Activated CD4-positive, alpha-beta T cell treated with anti-CD3 and anti-CD28 coated beads, Interleukin-2, amount 10 ng/mL, durations not matched to agents 24 days and 14 days (primary cell): ENCODE measurements at regions of chr1 and their contacts with region 1.

Region 1: GRCh38 chr1:22089787-22090186 is 37.3 kb downstream of the CDC42 start:
- DNase-seq: peak; percentile 76
- H3K4me3 Mint-ChIP-seq: peak overlapping the region; percentile 82
- H3K27ac Mint-ChIP-seq: peak overlapping the region; percentile 87
- H3K4me1 Mint-ChIP-seq: peaks cover 70% of the 10 kb centered on the region
- H3K27me3 Mint-ChIP-seq: no peaks in the 10 kb centered on the region

Region 2: GRCh38 chr1:22025368-22026155 is 64.2 kb before region 1 on chr1:
- intact Hi-C with region 1: loop called (anchors 2 kb)
- DNase-seq: peak; percentile 97
- H3K4me3 Mint-ChIP-seq: peak overlapping the region; percentile 90
- H3K27ac Mint-ChIP-seq: peak overlapping the region; percentile 100
- H3K4me1 Mint-ChIP-seq: peaks cover 48% of the 10 kb centered on the region
- H3K27me3 Mint-ChIP-seq: no peaks in the 10 kb centered on the region

Region 3: GRCh38 chr1:22075718-22076117 is 14.1 kb before region 1 on chr1:
- intact Hi-C with region 1: loop called (anchors 2 kb)
- DNase-seq: no peak
- H3K4me3 Mint-ChIP-seq: no peak overlapping the region
- H3K27ac Mint-ChIP-seq: peak overlapping the region; percentile 43
- H3K4me1 Mint-ChIP-seq: peaks cover 49% of the 10 kb centered on the region
- H3K27me3 Mint-ChIP-seq: no peaks in the 10 kb centered on the region

Region 4: DNA sequence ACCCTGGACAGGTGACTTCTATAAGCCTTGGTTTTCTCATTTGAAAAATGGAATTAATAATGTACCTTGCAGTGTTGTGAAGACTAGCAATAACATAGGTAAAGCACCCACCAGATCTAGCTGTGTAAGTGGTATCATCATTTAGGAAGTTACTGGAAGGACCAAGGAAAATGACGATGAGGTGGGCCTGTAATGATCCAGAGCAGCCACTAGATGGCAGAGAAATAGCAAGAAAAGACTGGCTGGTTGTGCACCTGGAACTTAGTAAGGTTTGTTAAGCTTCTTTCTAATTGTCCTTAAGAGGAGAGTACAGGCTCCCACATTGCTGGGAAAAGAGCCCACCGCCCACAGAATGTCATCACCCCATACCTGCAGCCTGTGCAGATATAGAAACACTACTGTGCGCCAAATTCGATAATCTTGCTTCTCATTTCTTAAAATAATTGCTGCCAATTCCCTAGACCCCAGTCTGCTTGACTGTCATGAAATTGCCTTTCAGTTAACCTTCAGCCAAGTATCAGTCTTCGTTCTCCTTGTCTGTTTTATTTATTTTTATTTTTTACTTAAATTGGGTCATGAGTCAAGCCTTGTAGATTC is 15.9 kb after region 1 on chr1:
- intact Hi-C with region 1: loop called (anchors 1 kb)
- DNase-seq: peak; percentile 79
- H3K4me3 Mint-ChIP-seq: peak overlapping the region; percentile 52
- H3K27ac Mint-ChIP-seq: peak overlapping the region; percentile 87
- H3K4me1 Mint-ChIP-seq: peaks cover 52% of the 10 kb centered on the region
- H3K27me3 Mint-ChIP-seq: no peaks in the 10 kb centered on the region

Region 5: GRCh38 chr1:22216210-22216883 is 126.6 kb after region 1 on chr1:
- intact Hi-C with region 1: no loop called
- DNase-seq: no peak
- H3K4me3 Mint-ChIP-seq: no peak overlapping the region
- H3K27ac Mint-ChIP-seq: no peak overlapping the region
- H3K4me1 Mint-ChIP-seq: no peaks in the 10 kb centered on the region
- H3K27me3 Mint-ChIP-seq: peaks cover 23% of the 10 kb centered on the region